HepG2 (cell line): ENCODE measurements at regions of chr16 and their contacts with region 1.

Region 1: DNA sequence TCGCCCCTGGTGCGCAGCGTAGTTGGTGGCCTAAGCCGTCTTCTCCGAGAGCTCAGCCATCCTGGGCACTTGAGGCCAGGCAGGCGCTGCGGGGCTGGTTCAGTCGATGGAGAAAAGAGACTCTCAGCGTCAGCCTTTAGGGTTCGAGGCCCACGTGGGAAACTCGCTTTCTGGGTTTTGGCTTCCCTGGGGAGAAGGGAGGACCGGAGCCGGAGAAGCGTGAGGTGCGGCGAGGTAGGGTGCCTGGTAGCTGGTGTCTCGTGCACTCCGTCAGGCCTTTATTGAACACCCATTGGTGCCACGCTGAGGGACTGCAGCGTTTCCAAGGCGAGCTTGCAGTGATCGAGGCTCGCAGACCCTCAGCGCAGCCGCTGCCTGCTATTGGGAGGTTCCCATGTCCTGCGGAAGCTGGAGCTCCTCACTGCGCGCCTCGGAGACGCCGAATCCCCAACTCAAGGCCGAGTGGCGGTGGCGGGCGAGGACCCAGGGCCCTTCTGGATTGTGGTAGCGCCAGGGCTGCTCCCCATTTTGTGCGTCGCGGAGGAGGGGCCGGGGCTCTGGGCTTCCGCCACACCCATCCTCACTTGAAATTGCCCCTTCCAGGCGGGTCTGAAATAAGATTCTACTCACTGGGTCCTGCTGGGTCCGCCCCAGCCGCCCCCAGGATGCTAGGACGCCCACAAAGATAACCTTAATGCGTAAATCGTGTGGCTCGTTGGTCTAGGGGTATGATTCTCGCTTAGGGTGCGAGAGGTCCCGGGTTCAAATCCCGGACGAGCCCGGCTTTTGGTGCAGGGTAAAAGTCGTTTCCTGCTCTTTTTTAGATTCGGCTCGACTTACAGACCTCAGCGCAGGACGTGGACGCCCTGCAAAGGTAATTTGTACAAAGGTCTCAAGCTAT is 1.2 kb downstream of the OR1F1 start:
- DNase-seq: peak; percentile 60
- ATAC-seq: peak; percentile 26
- H3K4me3 ChIP-seq: peak overlapping the region; percentile 72 to 91 (median 76)
- H3K27ac ChIP-seq: peak overlapping the region; percentile 40
- H3K4me1 ChIP-seq: peaks cover 43% of the 10 kb centered on the region
- H3K27me3 ChIP-seq: no peaks in the 10 kb centered on the region
- CTCF ChIP-seq: no peak
- EP300 ChIP-seq: peak in 1 of 2 experiments; percentile 14; a peak in 1 of 4 replicates
- POLR2A ChIP-seq: no peak
- RAD21 ChIP-seq: no peak

Region 2: DNA sequence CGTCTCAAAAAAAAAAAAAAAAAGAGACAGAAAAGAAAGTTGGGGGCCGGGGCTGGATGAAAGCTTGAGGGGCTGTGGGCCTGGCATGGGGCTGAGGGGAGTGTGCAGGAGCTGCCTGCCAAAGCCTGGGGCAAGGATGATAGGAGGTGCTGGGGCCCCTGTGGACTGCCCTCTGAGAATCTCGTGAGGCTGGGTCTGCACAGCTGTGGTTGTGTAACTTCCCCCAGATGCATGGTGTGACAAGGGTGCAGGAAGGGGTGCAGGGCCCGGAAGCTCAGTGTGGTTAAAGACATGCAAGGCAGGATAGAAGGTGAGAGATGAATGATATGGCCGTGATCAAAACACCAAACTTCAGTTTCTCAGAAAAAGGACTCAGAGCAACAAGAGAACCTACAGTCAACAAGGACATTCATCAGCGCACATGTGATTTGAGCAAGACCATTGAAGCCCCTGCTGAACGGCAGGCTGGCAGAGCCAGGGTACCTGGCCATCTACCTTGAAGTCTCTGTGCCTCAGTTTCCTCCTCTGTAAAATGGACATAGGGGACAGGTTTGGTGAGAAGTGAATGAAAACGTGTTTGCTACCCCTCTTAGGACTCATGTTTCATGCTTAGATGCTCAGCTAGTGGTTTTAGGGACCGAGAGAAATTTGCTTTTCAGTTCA is 114.2 kb before region 1 on chr16:
- CTCF ChIA-PET with region 1: no interaction called
- POLR2A ChIA-PET with region 1: no interaction called
- in situ Hi-C with region 1: no loop called
- intact Hi-C with region 1: no loop called
- DNase-seq: no peak
- ATAC-seq: no peak
- H3K4me3 ChIP-seq: no peak overlapping the region
- H3K27ac ChIP-seq: no peak overlapping the region
- H3K4me1 ChIP-seq: peaks cover 9% of the 10 kb centered on the region
- H3K27me3 ChIP-seq: peaks cover 2 to 16% of the 10 kb centered on the region in 2 experiments; a peak in 3 of 5 replicates
- CTCF ChIP-seq: no peak
- EP300 ChIP-seq: no peak
- POLR2A ChIP-seq: no peak
- RAD21 ChIP-seq: no peak

Region 3: DNA sequence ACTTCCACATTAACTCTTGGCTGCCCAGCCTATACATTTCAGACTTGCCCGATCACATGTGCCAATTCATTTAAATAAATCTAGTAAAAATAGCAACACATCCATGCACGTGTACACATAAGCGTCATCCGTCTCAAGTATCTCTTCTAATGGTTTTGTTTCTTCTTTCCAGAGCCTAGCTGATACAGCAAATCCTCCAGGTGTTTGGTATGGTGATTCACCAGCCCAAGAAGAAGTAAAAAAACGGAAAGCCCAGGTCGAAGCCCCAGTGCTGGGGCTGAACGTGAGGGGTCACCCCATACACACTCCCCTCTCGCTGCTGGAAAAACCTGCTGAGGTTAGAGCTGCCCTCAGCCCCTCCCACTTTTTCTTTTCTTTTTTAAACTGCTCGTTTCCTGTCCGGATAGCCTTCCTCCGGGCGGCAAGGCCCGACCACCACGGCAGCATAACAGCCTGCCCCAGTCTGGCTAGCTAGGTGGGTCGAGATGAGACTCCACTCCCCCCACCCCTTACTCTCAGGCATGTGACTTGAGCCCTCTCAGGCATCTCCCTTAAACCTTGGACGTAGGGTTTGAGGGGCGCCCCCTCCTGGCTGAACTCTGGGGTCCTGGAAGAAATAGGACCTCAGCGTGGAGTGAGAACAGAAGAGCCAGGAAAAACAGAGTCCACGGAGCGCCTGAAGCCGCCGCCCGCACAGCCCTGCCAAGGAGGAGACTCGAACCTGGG is 15.1 kb before region 1 on chr16:
- CTCF ChIA-PET with region 1: no interaction called
- POLR2A ChIA-PET with region 1: interaction called, 22 read pairs
- in situ Hi-C with region 1: no loop called
- intact Hi-C with region 1: no loop called
- DNase-seq: peak; percentile 65
- ATAC-seq: no peak
- H3K4me3 ChIP-seq: peak overlapping the region; percentile 5 to 71 (median 50)
- H3K27ac ChIP-seq: no peak overlapping the region
- H3K4me1 ChIP-seq: peaks cover 50% of the 10 kb centered on the region
- H3K27me3 ChIP-seq: peaks cover 0 to under 1% of the 10 kb centered on the region in 2 experiments; a peak in 1 of 5 replicates
- CTCF ChIP-seq: peak; percentile 72
- EP300 ChIP-seq: no peak
- POLR2A ChIP-seq: no peak
- RAD21 ChIP-seq: no peak

Region 4: GRCh38 chr16:3234543-3235541 is 45.7 kb after region 1 on chr16 and contains the start of gene ZNF200:
- CTCF ChIA-PET with region 1: no interaction called
- POLR2A ChIA-PET with region 1: no interaction called
- in situ Hi-C with region 1: no loop called
- intact Hi-C with region 1: no loop called
- DNase-seq: peak; percentile 91
- ATAC-seq: peak; percentile 97
- H3K4me3 ChIP-seq: peak within 1 kb of the TSS; percentile 86 to 99 (median 98)
- H3K27ac ChIP-seq: peak within 1 kb of the TSS; percentile 91
- H3K4me1 ChIP-seq: peaks cover 22% of the 10 kb centered on the region
- H3K27me3 ChIP-seq: no peaks in the 10 kb centered on the region; a peak in 1 of 5 replicates
- CTCF ChIP-seq: no peak
- EP300 ChIP-seq: no peak
- POLR2A ChIP-seq: peak; percentile 85 to 93
- RAD21 ChIP-seq: no peak; the same call in 1 of the 2 replicates
- total RNA-seq, gene ZNF200: 16.5 and 18.0 TPM in 2 replicates

Region 5: DNA sequence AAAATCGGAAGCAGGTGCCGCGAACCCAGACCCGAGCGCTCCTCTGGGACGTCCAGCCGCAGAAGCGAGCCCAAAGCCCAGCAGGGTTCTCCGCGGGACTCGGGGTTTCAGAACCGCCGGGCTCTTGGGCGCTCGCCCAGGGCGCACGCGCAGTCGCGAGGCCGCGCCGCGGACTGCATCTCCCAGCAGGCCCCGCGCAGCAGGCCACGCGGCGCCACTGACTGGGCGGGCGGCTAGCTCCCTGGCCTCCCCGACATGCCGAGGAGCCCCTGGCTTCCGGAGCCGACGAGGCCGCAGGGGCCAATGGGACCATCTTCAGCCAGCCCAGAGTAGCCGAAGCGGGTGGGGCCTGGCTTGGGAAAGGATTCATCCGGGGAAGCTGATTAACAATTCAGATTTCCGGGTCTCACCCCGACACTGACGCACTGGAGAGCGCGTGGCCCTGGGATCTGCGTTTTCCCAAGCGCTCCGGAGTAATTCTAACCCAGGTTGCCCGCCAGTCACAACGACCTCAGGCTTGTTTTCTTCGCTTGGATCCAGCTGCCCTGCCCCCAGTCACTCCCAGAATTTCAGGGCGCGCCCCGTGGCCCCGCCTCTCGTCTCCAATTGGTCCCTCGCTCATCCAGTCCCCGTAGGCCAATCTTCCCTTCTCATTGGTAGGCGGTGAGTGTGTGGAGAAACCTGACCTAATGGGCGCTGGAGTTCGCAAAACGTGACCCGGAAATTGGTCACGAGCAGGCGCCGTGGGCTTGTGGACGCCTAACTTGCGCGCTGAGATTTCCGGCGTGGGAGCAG is 93.8 kb after region 1 on chr16 and contains the start of gene ZNF263:
- CTCF ChIA-PET with region 1: no interaction called
- POLR2A ChIA-PET with region 1: interaction called, 10 read pairs
- in situ Hi-C with region 1: no loop called
- intact Hi-C with region 1: no loop called
- DNase-seq: peak; percentile 97
- ATAC-seq: peak; percentile 93
- H3K4me3 ChIP-seq: peak within 1 kb of the TSS; percentile 79 to 100 (median 99)
- H3K27ac ChIP-seq: peak within 1 kb of the TSS; percentile 99
- H3K4me1 ChIP-seq: peaks cover 45% of the 10 kb centered on the region
- H3K27me3 ChIP-seq: no peaks in the 10 kb centered on the region; a peak in 1 of 5 replicates
- CTCF ChIP-seq: peak; percentile 16; the same call in 1 of the 2 replicates
- EP300 ChIP-seq: peak in 1 of 2 experiments; percentile 29; a peak in 1 of 4 replicates
- POLR2A ChIP-seq: peak; percentile 68 to 89
- RAD21 ChIP-seq: peak; percentile 28
- total RNA-seq, gene ZNF263: 40.3 and 41.2 TPM in 2 replicates